ENCODE measurements at regions of chr22 and their contacts with region 1.

Region 1: DNA sequence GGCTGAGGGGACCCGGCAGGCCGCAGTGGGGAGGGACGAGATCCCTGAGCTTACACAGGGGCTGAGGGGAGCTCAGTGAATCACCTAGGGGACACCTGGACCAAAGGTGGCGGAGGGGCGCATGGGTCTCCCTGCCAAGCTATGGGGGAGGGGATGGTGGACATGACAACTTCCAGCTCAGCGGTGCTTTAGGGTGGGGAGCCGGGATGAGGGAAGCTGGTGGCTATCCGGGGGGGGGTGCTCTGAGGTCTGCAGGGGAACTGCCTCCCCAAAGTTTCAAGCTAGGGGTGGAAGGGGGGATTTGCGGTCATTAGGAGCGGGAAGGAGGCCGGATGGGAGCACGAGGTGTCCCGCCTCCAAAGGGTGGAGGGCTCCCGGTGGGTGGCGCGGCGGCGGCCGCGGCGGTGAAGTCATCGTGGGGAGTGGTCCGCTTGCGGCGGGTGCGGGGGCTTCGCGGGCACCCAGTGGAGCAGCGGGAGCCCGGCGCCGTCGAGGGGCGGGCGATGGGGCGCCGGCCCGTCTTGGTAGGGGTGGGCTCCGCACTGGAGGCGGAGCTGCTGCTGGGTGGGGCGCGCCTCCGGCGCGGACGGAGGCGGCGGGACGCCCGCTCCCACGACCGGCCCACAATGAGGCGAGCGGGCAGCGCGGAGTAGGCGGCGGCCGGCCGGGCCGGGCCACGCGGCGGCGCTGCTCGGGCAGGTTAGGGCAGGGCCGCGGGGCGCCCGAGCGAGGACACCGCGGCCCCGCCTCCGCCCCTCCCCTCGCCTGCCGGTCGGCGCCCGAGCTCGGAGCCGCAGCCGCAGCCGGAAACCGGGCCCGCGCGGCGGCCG is at the start of gene MICALL1:
- DNase-seq: no peak
- ATAC-seq: peak; percentile 95
- H3K4me3 ChIP-seq: peak within 1 kb of the TSS; percentile 63 to 75
- H3K27ac ChIP-seq: peak within 1 kb of the TSS; percentile 76
- H3K4me1 ChIP-seq: peaks cover 12% of the 10 kb centered on the region
- H3K27me3 ChIP-seq: no peaks in the 10 kb centered on the region
- CTCF ChIP-seq: no peak; the same call in 1 of the 2 replicates
- total RNA-seq, gene MICALL1: 34.5 TPM

Region 2: GRCh38 chr22:37953437-37954179 is 47.9 kb after region 1 on chr22 and contains the starts of genes C22orf23 and POLR2F:
- CTCF ChIA-PET with region 1: no interaction called
- POLR2A ChIA-PET with region 1: interaction called, 13 read pairs
- in situ Hi-C with region 1: no loop called
- intact Hi-C with region 1: no loop called
- DNase-seq: peak; percentile 68
- ATAC-seq: peak; percentile 96
- H3K4me3 ChIP-seq: peak within 1 kb of the TSS; percentile 83 to 93
- H3K27ac ChIP-seq: peak within 1 kb of the TSS; percentile 83
- H3K4me1 ChIP-seq: peaks cover 6% of the 10 kb centered on the region; the same call in 1 of the 2 replicates
- H3K27me3 ChIP-seq: no peaks in the 10 kb centered on the region
- CTCF ChIP-seq: no peak
- total RNA-seq, gene C22orf23: 0.49 TPM
- total RNA-seq, gene POLR2F: 89.7 TPM

Region 3: GRCh38 chr22:37982938-37983859 is 77.5 kb after region 1 on chr22:
- CTCF ChIA-PET with region 1: no interaction called
- POLR2A ChIA-PET with region 1: no interaction called
- in situ Hi-C with region 1: no loop called
- intact Hi-C with region 1: no loop called
- DNase-seq: no peak
- ATAC-seq: no peak
- H3K4me3 ChIP-seq: no peak overlapping the region
- H3K27ac ChIP-seq: no peak overlapping the region
- H3K4me1 ChIP-seq: no peaks in the 10 kb centered on the region
- H3K27me3 ChIP-seq: no peaks in the 10 kb centered on the region
- CTCF ChIP-seq: no peak

Measured in Panc1 (cell line).